T-cell (primary cell): ENCODE measurements at regions of chr11 and their contacts with region 1.

Region 1: GRCh38 chr11:67006139-67006884 is 16.6 kb upstream of the SYT12 start:
- DNase-seq: peak in 9 of 35 experiments; percentile 6 to 37 (median 12)
- ATAC-seq: peak in 2 of 4 experiments; percentile 26 to 44
- H3K4me3 ChIP-seq: no peak overlapping the region
- H3K4me3 Mint-ChIP-seq: no peak overlapping the region
- H3K27ac ChIP-seq: no peak overlapping the region
- H3K27ac Mint-ChIP-seq: peak overlapping the region in 1 of 2 donors; percentile 45
- H3K4me1 ChIP-seq: no peaks in the 10 kb centered on the region
- H3K4me1 Mint-ChIP-seq: peaks cover 2 to 10% (median 4%) of the 10 kb centered on the region in 3 donors
- H3K27me3 ChIP-seq: peaks cover 0 to 10% of the 10 kb centered on the region in 2 experiments
- H3K27me3 Mint-ChIP-seq: peaks cover 0 to 4% of the 10 kb centered on the region in 2 donors

Region 2: GRCh38 chr11:65194564-65194963 is 1811.7 kb before region 1 on chr11:
- CTCF ChIA-PET with region 1: no interaction called
- POLR2A ChIA-PET with region 1: interaction called in 1 of 2 experiments, 16 read pairs
- DNase-seq: no peak
- ATAC-seq: no peak
- H3K4me3 ChIP-seq: no peak overlapping the region
- H3K4me3 Mint-ChIP-seq: no peak overlapping the region
- H3K27ac ChIP-seq: no peak overlapping the region
- H3K27ac Mint-ChIP-seq: no peak overlapping the region
- H3K4me1 ChIP-seq: no peaks in the 10 kb centered on the region
- H3K4me1 Mint-ChIP-seq: peaks cover 10 to 20% (median 12%) of the 10 kb centered on the region in 3 donors
- H3K27me3 ChIP-seq: no peaks in the 10 kb centered on the region
- H3K27me3 Mint-ChIP-seq: no peaks in the 10 kb centered on the region

Region 3: DNA sequence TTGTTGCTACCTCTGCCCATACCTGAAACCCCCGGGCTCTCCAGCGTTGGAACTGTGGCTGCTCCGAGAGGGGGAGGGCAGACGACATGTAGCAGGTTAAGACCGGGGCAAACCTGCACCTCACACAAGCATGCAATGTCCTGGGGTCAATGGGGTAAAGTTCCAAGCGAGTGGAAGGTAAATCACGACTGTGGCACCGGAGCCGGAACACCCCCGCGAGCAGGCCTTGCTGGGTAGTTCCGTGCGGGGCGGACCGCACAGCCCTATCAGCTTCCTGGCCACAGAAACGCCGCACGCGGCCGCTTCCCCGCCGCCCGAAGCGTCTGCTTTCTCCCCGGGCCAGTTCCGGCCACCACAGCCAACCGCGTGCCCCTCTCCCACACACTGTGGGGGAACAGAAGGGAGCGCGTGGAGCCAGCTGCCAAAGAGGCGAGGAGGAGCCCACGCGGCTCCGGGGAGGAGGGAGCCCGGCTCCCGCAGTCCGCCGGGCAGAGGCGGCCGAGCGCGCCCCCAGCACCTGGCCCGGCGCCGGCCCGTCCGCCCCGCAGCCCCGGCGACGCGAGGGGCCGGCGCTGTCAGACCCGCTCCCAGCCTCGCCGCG is 278.9 kb before region 1 on chr11:
- CTCF ChIA-PET with region 1: no interaction called
- POLR2A ChIA-PET with region 1: no interaction called
- DNase-seq: peak in 9 of 35 experiments; percentile 6 to 39 (median 11)
- ATAC-seq: peak; percentile 43 to 68 (median 60)
- H3K4me3 ChIP-seq: peak overlapping the region; percentile 37 to 64
- H3K4me3 Mint-ChIP-seq: peak overlapping the region; percentile 49 to 56 (median 51)
- H3K27ac ChIP-seq: no peak overlapping the region
- H3K27ac Mint-ChIP-seq: no peak overlapping the region
- H3K4me1 ChIP-seq: peaks cover 2 to 20% of the 10 kb centered on the region in 2 experiments
- H3K4me1 Mint-ChIP-seq: peaks cover 17 to 18% (median 18%) of the 10 kb centered on the region in 3 donors
- H3K27me3 ChIP-seq: peaks cover 20 to 62% of the 10 kb centered on the region in 2 experiments
- H3K27me3 Mint-ChIP-seq: peaks cover 45 to 66% of the 10 kb centered on the region in 2 donors